OCI-LY7 (cell line): ENCODE measurements at regions of chr20 and their contacts with region 1.

Region 1: GRCh38 chr20:16761305-16761829 is 13.2 kb downstream of the OTOR start:
- DNase-seq: peak; percentile 73
- H3K4me3 ChIP-seq: no peak overlapping the region
- H3K27ac ChIP-seq: no peak overlapping the region
- H3K4me1 ChIP-seq: peaks cover 3% of the 10 kb centered on the region
- CTCF ChIP-seq: peak; percentile 86

Region 2: DNA sequence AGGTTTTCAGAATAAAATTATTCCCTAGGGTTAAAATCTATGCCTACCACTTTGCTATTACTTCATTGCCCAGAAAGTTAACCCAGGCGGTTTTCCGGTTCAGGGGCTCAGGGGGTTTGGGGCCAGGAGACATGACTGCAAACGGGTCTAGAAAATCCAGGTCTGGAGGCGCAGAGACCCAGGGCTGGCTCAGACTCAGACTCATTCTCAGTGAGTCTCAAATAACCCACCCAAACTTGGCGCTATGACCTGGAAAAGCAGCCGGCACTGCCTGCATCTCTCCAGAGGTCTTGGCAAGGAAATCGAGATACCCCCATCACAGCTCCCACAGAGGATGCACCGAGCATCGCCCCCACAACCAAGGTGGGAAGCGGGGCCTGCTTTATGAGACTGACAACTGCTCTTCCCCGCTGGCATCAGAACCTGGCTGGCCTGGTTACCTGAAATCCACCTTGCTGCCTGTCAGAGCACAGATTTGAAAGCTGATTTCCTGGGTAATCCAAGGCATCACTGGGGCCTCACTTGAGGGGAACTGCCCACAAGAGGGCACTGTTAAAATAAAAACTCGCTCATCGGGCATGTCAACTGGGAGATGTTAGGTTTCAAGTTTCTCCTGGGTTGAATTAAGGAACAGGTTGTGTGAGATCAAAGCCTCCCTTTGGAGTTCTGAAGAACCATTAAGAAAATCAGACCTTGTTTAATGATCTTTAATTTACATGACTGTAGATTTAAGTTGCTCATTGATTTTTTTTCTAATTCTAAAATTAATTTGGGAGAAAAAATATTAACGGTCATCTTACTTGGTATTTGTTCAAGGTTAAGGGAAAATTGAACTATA is 243.2 kb before region 1 on chr20:
- CTCF ChIA-PET with region 1: no interaction called
- POLR2A ChIA-PET with region 1: no interaction called
- intact Hi-C with region 1: loop called (anchors 1 kb)
- DNase-seq: peak; percentile 55
- H3K4me3 ChIP-seq: no peak overlapping the region
- H3K27ac ChIP-seq: no peak overlapping the region
- H3K4me1 ChIP-seq: peaks cover 7% of the 10 kb centered on the region
- CTCF ChIP-seq: peak; percentile 83

Region 3: DNA sequence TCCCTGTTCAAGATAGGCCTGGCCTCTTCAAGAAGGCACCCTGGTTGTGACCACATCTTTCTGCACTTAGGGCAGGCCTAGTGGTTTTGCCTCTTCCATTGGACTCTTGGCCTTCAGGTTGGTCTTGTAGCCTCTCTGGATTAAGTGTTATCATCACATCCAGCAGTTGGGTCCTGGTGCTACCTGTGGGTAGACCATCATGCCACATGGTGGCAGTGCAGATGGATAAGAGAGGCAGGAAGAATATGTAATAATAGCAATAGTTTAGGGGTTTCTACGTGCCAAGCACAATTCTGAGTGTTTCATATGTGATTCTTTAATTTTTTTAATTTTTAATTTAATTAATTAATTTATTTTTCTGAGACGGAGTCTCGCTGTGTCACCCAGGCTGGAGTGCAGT is 60.1 kb before region 1 on chr20:
- CTCF ChIA-PET with region 1: no interaction called
- POLR2A ChIA-PET with region 1: interaction called, 4 read pairs
- intact Hi-C with region 1: loop called (anchors 1 kb)
- DNase-seq: peak; percentile 52
- H3K4me3 ChIP-seq: no peak overlapping the region
- H3K27ac ChIP-seq: no peak overlapping the region
- H3K4me1 ChIP-seq: no peaks in the 10 kb centered on the region
- CTCF ChIP-seq: peak; percentile 74